MCF 10A (cell line): ENCODE measurements at regions of chr5 and their contacts with region 1.

Region 1: DNA sequence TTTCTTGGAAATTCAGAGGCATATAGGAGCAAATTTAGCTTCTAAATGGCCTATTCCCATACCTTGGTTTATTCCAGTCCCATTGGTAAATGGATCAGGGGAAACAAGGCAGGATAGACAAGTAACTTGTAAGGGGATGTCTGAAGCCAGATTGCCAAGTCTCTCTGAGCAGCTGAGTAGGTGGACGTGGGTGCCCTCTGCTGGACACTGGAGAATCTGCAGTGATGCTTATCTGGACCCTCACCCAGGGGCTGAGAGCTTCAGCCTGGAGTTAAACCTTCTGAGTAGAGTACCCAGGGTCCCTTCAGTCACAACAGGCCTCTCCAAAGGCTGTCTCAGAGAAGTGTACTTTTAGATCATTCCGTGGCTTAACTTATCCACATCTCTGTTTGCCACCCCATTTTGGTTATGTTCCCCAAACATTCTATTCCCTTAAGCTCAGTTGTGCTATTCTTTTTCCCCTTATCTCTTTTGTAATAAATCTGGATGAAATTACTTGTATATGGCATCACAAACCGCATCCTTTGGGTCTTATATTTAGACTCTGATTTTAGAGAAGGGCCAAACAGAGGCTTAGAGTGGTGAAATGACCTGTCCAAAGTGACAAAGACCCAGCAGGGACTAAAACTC is 218.3 kb upstream of the GLRA1 start:
- DNase-seq: peak; percentile 75
- H3K4me3 Mint-ChIP-seq: no peak overlapping the region
- H3K27ac Mint-ChIP-seq: no peak overlapping the region
- H3K4me1 Mint-ChIP-seq: no peaks in the 10 kb centered on the region
- H3K27me3 Mint-ChIP-seq: peaks cover 26% of the 10 kb centered on the region
- CTCF ChIP-seq: peak; percentile 99

Region 2: DNA sequence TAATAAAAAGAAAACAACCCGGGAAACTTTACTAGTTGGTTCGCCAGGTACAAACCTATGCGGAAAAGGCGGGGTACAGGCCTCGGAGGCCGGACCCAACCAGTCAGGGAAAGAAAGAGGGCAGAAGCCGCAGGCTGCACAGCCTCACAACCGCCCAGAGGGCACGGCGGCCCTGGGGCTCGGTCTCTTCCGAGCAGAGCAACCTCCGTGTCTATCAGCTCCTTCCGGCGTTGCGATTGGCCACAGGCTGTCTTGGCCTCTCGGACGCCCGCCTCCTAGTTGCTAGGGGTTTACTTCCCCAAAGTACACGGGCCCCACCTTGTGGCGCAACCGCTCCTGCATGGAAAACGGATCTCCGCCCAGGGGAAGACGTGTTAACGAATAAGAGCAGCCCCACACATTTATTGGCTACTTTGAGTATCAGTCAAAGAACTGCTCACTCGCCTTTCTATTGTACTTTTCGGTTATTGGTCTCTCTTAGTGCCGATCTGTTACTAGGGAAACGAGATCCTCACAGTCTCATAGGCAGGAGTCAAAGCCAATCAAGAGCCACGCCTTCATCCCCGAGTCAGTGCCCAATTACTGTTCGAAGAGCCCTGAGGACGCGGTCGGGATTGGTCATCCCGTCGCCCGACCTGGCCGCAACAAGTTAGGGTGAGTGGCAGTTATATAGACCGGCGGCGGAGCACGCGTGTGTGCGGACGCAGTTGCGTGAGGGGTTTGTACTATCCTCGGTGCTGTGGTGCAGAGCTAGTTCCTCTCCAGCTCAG is 371.5 kb before region 1 on chr5 and contains the start of gene G3BP1:
- CTCF ChIA-PET with region 1: interaction called, 14 read pairs
- POLR2A ChIA-PET with region 1: interaction called, 3 read pairs
- intact Hi-C with region 1: loop called (anchors 2 kb)
- DNase-seq: peak; percentile 100
- H3K4me3 Mint-ChIP-seq: no peak within 1 kb of the TSS
- H3K27ac Mint-ChIP-seq: no peak within 1 kb of the TSS
- H3K4me1 Mint-ChIP-seq: peaks cover 13% of the 10 kb centered on the region
- H3K27me3 Mint-ChIP-seq: no peaks in the 10 kb centered on the region
- CTCF ChIP-seq: peak; percentile 67
- total RNA-seq, gene G3BP1: 279 and 282 TPM in 2 replicates

Region 3: DNA sequence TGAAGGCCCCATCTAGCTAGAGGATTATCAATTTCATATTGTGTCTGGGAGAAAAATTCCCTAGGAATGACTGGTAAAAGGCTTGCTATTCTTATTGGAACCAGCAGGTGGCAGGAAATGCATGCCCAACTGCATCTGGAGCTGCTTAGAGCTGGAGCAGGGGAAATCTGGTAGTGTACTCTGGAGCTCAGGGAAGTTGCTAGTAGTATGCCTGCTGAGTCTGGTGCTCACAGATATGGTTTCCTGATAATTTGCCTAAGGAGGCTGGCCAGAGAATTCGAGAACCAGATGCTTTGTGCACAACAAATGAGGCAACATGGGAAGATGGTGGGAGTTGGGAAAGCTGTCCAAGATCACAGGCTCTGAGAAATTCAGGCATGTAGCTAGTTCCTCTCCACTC is 317.5 kb before region 1 on chr5:
- CTCF ChIA-PET with region 1: interaction called, 531 read pairs
- POLR2A ChIA-PET with region 1: interaction called, 15 read pairs
- intact Hi-C with region 1: loop called (anchors 1 kb)
- DNase-seq: peak; percentile 81
- H3K4me3 Mint-ChIP-seq: no peak overlapping the region
- H3K27ac Mint-ChIP-seq: no peak overlapping the region
- H3K4me1 Mint-ChIP-seq: no peaks in the 10 kb centered on the region
- H3K27me3 Mint-ChIP-seq: no peaks in the 10 kb centered on the region
- CTCF ChIP-seq: peak; percentile 94

Region 4: GRCh38 chr5:151896031-151896691 is 246.8 kb before region 1 on chr5:
- CTCF ChIA-PET with region 1: interaction called, 18 read pairs
- POLR2A ChIA-PET with region 1: no interaction called
- intact Hi-C with region 1: no loop called
- DNase-seq: peak; percentile 65
- H3K4me3 Mint-ChIP-seq: peak overlapping the region; percentile 30
- H3K27ac Mint-ChIP-seq: peak overlapping the region; percentile 68
- H3K4me1 Mint-ChIP-seq: peaks cover 23% of the 10 kb centered on the region
- H3K27me3 Mint-ChIP-seq: no peaks in the 10 kb centered on the region
- CTCF ChIP-seq: no peak

Region 5: DNA sequence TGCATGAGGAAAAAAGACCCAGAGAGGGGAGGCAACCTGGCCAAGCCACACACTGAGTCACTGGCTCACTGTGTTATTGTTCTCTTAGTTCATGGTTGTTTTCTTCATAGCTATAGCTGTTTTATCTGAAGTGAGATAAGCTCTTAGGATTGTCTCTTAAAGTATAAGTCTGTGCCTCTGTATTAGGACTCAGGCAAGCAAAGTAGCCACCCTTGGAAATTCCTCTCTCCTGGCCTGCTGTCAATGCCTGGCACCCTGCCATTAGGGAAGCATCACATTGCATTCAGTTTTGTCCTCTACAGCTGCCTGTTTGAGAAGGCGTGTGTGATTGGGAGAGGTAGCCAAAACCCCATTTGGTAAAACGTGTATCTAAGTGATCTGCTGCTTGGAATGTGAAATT is 70.9 kb before region 1 on chr5:
- CTCF ChIA-PET with region 1: interaction called, 18 read pairs
- POLR2A ChIA-PET with region 1: no interaction called
- intact Hi-C with region 1: no loop called
- DNase-seq: peak; percentile 52
- H3K4me3 Mint-ChIP-seq: no peak overlapping the region
- H3K27ac Mint-ChIP-seq: no peak overlapping the region
- H3K4me1 Mint-ChIP-seq: no peaks in the 10 kb centered on the region
- H3K27me3 Mint-ChIP-seq: peaks cover 73% of the 10 kb centered on the region
- CTCF ChIP-seq: no peak

Region 6: DNA sequence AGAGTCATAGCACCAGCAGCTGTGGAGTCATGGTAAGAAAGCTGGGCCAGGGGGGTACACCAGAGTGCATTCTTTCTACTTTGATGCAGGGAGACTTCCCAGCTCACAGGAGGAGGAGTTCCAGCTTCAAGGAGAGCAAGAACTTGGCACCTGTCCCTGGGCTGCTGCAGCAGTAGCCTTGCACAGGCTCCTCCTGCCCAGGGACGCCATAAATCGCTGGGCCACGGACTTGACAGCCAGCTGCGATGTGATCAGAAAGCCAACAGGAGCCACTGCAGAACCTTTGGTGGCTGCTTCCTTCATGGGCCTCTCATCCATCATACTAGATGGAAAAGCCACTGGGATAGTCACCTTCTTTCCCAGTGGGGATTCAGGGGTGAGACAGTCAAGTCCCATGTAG is 27.4 kb after region 1 on chr5:
- CTCF ChIA-PET with region 1: interaction called, 32 read pairs
- POLR2A ChIA-PET with region 1: no interaction called
- intact Hi-C with region 1: no loop called
- DNase-seq: peak; percentile 16
- H3K4me3 Mint-ChIP-seq: no peak overlapping the region
- H3K27ac Mint-ChIP-seq: no peak overlapping the region
- H3K4me1 Mint-ChIP-seq: no peaks in the 10 kb centered on the region
- H3K27me3 Mint-ChIP-seq: peaks cover 52% of the 10 kb centered on the region
- CTCF ChIP-seq: no peak

Region 7: DNA sequence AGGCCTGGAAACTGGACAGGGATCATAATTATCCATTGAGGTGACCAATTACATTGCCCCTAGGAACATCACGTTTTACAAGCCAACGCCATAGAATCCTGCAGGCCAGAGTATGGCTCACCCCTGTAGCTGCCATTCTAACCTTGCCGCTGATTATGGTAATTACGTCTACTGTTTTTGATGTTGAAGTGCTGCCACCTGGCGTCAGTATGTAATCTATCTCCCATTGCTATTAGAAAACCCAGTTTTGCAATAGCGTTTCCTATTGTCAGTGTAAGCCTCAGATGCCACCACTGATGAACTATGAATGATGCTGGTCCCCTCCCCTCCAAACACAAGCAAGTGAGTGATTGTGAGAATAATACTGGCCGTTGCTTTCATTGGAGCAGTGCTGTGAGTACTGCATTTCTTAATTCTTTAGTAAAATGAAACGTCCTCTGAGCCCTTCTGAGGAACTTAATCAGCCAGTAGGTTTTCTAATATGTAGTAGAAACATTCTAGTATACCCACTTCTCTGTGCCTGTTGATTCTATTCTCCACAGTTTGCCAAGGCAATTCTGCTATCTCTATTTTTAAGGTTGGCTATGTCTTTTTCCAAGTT is 362.6 kb after region 1 on chr5:
- CTCF ChIA-PET with region 1: interaction called, 8 read pairs
- POLR2A ChIA-PET with region 1: no interaction called
- intact Hi-C with region 1: loop called (anchors 2 kb)
- DNase-seq: peak; percentile 81
- H3K4me3 Mint-ChIP-seq: no peak overlapping the region
- H3K27ac Mint-ChIP-seq: no peak overlapping the region
- H3K4me1 Mint-ChIP-seq: no peaks in the 10 kb centered on the region
- H3K27me3 Mint-ChIP-seq: peaks cover 33% of the 10 kb centered on the region
- CTCF ChIP-seq: peak; percentile 68